Common myeloid progenitor, CD34-positive (primary cell): ENCODE measurements at regions of chrX and their contacts with region 1.

Region 1: GRCh38 chrX:44889824-44890223 is 16.8 kb downstream of the KDM6A start:
- DNase-seq: peak in 2 of 3 donors; percentile 46 to 64
- H3K4me3 ChIP-seq: no peak overlapping the region
- H3K27ac ChIP-seq: no peak overlapping the region
- H3K4me1 ChIP-seq: peaks cover 0 to 9% (median 1%) of the 10 kb centered on the region in 4 experiments
- H3K27me3 ChIP-seq: no peaks in the 10 kb centered on the region

Region 2: GRCh38 chrX:44330227-44330626 is 559.6 kb before region 1 on chrX:
- CTCF ChIA-PET with region 1: no interaction called
- POLR2A ChIA-PET with region 1: interaction called, 10 read pairs
- DNase-seq: peak in 1 of 3 donors; percentile 35
- H3K4me3 ChIP-seq: no peak overlapping the region
- H3K27ac ChIP-seq: no peak overlapping the region
- H3K4me1 ChIP-seq: peaks cover 0 to 20% (median 0%) of the 10 kb centered on the region in 4 experiments
- H3K27me3 ChIP-seq: peaks cover 0 to 21% (median 0%) of the 10 kb centered on the region in 5 experiments